ENCODE measurements at regions of chr3 and their contacts with region 1.

Region 1: DNA sequence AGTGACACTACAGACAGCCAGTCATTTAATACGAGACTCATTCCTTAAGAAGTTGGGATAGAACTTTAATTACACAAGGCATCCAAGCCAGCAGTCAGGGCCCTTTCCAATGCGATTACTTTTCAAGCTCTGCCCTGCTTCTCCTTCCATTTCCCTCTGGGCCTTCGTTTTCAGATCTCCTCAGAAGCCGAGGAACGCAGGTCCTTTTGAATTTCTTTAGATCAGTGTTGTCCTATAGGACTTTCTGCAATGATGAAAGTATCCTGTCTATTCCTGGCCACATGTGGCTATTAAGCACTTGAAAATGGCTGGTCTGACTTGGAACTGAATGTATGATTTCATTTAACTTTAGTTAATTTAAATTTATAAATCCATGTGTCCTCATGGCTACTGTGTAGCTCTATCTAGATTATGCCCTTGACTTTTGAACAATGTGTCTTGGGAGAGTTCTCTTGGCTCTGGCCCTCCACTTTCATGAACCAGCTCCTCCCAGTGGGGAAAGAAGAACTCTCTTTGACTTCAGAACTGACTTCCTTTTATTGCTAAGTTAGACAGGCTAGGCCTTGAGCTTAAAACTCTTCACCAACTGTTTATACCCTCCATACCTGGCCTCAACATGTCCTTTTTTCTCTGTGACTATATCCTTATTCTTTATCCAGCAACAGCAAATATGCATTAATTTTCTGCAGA is 22.6 kb downstream of the TGFBR2 start:
- DNase-seq: no peak
- ATAC-seq: peak; percentile 52
- H3K4me3 Mint-ChIP-seq: peak overlapping the region; percentile 49
- H3K27ac Mint-ChIP-seq: peak overlapping the region; percentile 91
- H3K4me1 Mint-ChIP-seq: peaks cover 94% of the 10 kb centered on the region
- H3K27me3 Mint-ChIP-seq: no peaks in the 10 kb centered on the region
- CTCF ChIP-seq: no peak

Region 2: DNA sequence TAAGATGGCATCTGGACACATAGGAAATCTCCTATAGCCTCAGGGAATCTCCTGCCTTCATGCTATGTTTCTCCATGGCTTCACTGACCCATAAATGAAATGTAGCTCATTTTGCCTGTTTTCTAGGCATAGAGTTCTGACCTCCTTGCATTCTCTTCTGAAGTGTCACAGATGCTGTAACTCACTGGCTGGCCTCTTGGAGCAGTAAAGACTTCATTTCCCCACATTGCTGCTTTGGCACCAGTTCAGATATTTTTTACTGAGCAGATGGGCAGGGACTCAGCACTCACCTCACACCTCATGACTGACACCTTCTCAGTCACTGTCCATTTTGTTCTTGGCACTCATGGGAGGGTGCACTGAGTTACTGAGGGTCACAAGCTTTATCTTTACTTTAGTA is 309.3 kb before region 1 on chr3:
- CTCF ChIA-PET with region 1: interaction called, 18 read pairs
- POLR2A ChIA-PET with region 1: interaction called, 4 read pairs
- intact Hi-C with region 1: loop called (anchors 1 kb)
- DNase-seq: no peak
- ATAC-seq: peak; percentile 98
- H3K4me3 Mint-ChIP-seq: no peak overlapping the region
- H3K27ac Mint-ChIP-seq: no peak overlapping the region
- H3K4me1 Mint-ChIP-seq: peaks cover 6% of the 10 kb centered on the region
- H3K27me3 Mint-ChIP-seq: no peaks in the 10 kb centered on the region
- CTCF ChIP-seq: peak; percentile 46

Region 3: GRCh38 chr3:30644593-30645012 is 15.6 kb after region 1 on chr3:
- CTCF ChIA-PET with region 1: interaction called, 11 read pairs
- POLR2A ChIA-PET with region 1: interaction called, 11 read pairs
- intact Hi-C with region 1: loop called (anchors 1 kb)
- DNase-seq: no peak
- ATAC-seq: peak; percentile 38
- H3K4me3 Mint-ChIP-seq: peak overlapping the region; percentile 68
- H3K27ac Mint-ChIP-seq: peak overlapping the region; percentile 91
- H3K4me1 Mint-ChIP-seq: peaks cover 98% of the 10 kb centered on the region
- H3K27me3 Mint-ChIP-seq: no peaks in the 10 kb centered on the region
- CTCF ChIP-seq: no peak

Region 4: DNA sequence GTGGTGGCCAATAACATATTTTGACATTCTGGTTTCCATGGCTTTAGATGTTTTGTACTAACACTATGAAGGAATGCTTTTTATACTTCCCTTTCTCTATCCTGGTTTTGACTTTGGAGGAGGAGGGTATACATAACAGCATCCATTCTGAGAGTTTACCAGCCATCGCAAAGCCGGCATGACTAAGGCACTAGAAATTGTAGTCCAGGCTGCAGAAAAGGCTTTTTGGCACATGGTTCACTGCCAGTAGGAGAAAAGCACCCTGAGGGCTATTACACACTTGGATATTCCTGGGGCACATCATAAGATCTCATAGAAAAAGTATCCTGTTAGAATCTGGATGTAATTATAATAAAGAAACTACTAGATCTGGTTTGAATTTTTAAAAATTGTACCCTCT is 1005.4 kb after region 1 on chr3:
- CTCF ChIA-PET with region 1: no interaction called
- POLR2A ChIA-PET with region 1: no interaction called
- intact Hi-C with region 1: no loop called
- DNase-seq: no peak
- ATAC-seq: no peak
- H3K4me3 Mint-ChIP-seq: no peak overlapping the region
- H3K27ac Mint-ChIP-seq: no peak overlapping the region
- H3K4me1 Mint-ChIP-seq: peaks cover 26% of the 10 kb centered on the region
- H3K27me3 Mint-ChIP-seq: no peaks in the 10 kb centered on the region
- CTCF ChIP-seq: no peak

Measured in activated B cell treated with CpG ODN at 0.5 μM for 24 hours (primary cell).